Calu3 (cell line): ENCODE measurements at regions of chr4 and their contacts with region 1.

Region 1: GRCh38 chr4:101987623-101988243 is 197.2 kb downstream of the BANK1 start:
- DNase-seq: no peak
- H3K4me3 Mint-ChIP-seq: no peak overlapping the region
- H3K27ac Mint-ChIP-seq: no peak overlapping the region
- H3K4me1 Mint-ChIP-seq: no peaks in the 10 kb centered on the region
- H3K27me3 Mint-ChIP-seq: no peaks in the 10 kb centered on the region
- CTCF ChIP-seq: no peak

Region 2: GRCh38 chr4:101944649-101945048 is 43.1 kb before region 1 on chr4:
- CTCF ChIA-PET with region 1: no interaction called
- intact Hi-C with region 1: no loop called
- DNase-seq: no peak
- H3K4me3 Mint-ChIP-seq: no peak overlapping the region
- H3K27ac Mint-ChIP-seq: no peak overlapping the region
- H3K4me1 Mint-ChIP-seq: no peaks in the 10 kb centered on the region
- H3K27me3 Mint-ChIP-seq: no peaks in the 10 kb centered on the region
- CTCF ChIP-seq: no peak

Region 3: GRCh38 chr4:102255454-102255853 is 267.7 kb after region 1 on chr4:
- CTCF ChIA-PET with region 1: no interaction called
- intact Hi-C with region 1: loop called (anchors 10 kb)
- DNase-seq: no peak
- H3K4me3 Mint-ChIP-seq: no peak overlapping the region
- H3K27ac Mint-ChIP-seq: no peak overlapping the region
- H3K4me1 Mint-ChIP-seq: peaks cover 7% of the 10 kb centered on the region
- H3K27me3 Mint-ChIP-seq: no peaks in the 10 kb centered on the region
- CTCF ChIP-seq: no peak